ENCODE measurements at regions of chr10 and their contacts with region 1.

Region 1: DNA sequence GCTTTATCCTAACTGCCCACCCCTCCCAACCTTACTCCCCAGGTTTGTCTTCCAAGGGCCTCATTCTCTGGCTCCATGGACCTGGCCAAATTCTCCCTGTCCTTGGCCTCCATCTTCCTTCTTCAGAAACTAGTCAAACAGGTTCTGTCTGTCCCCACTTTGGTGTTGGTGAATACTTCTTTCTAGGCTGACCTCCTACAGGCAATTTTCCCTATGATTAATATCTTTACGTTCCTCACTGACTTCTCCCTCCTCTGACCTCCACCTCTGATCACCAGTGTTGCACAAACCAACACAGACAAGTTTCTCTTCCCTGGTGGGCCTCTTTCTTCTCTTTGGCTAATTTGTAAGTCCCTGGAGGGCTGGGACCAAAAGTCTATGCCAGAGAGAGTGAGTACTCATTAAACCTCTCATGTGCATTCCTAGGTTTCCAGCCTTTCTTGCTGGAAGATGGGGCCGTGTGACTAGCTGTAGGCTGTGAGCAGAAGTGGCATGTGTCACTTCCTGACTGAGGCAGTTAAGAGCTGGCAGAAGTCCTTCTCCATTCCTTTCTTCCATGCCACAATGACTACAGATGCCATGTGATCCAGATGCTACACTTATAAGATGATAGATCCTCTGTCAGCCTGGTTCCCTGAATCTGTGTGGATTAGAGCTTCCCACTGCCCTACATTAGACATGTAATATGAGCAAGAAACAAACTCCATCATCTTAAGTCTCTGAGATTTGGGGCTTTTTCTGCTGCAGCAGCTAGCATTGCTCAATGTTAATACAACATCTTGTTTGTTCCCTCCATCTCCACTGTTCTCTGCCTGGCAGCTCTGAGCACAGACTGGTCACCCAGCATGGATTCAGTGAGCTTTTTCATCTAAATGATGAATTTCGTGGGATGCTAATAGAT is 382.7 kb downstream of the RPS24 start:
- DNase-seq: no peak
- ATAC-seq: no peak
- H3K4me3 Mint-ChIP-seq: no peak overlapping the region
- H3K27ac Mint-ChIP-seq: no peak overlapping the region
- H3K4me1 Mint-ChIP-seq: no peaks in the 10 kb centered on the region
- H3K27me3 Mint-ChIP-seq: peaks cover 4% of the 10 kb centered on the region
- CTCF ChIP-seq: no peak

Region 2: DNA sequence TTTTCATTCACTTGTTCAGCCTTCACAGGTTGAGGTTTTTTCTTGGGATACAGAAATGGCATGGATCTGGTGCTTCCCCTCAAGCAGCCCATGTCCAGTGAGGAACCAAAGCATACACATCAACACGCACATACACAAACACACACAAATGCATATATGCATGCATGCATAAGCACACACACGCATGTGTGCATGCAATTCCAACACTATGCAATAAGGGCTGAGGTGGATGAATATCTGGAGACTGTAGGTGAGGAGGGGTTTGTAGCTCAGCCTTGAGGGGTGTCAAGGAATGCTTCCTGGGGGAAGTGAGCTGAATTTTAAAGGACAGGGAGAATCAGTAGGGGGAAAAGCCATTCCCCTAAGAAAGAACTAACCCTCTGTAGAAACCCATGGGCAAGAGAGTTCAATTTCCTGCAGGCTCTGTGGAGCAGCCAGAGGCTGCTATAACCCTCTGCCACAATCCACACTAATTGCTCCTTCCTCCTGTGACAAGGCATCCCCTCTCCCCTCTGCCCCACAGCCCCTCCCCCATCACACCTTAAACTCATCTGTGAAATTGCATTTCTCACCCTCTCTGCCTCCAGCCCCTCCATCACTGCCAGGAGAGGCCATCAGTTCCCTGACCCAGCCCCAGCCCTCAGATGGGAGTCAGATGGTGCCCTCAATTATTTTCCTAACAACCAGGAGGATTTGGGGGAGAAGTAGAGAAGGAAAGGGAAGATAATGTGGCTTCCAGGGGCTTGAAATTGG is 66.3 kb before region 1 on chr10:
- CTCF ChIA-PET with region 1: no interaction called
- POLR2A ChIA-PET with region 1: no interaction called
- intact Hi-C with region 1: loop called (anchors 5 kb)
- DNase-seq: no peak
- ATAC-seq: no peak
- H3K4me3 Mint-ChIP-seq: no peak overlapping the region
- H3K27ac Mint-ChIP-seq: no peak overlapping the region
- H3K4me1 Mint-ChIP-seq: no peaks in the 10 kb centered on the region
- H3K27me3 Mint-ChIP-seq: peaks cover 4% of the 10 kb centered on the region
- CTCF ChIP-seq: no peak